Psoas muscle (tissue), 8 donors: ENCODE measurements at regions of chr2 and their contacts with region 1.

Region 1: GRCh38 chr2:85504778-85505323 is 34.1 kb upstream of the MAT2A start:
- DNase-seq: peak; percentile 77 to 83
- ATAC-seq: peak; percentile 91 to 95 (median 94)
- H3K4me3 ChIP-seq: no peak overlapping the region
- H3K27ac ChIP-seq: peak overlapping the region; percentile 73
- H3K4me1 ChIP-seq: peaks cover 26% of the 10 kb centered on the region
- H3K27me3 ChIP-seq: no peaks in the 10 kb centered on the region
- CTCF ChIP-seq: no peak

Region 2: GRCh38 chr2:85437488-85438284 is 67.2 kb before region 1 on chr2:
- intact Hi-C with region 1: loop called (anchors 2 to 5 kb)
- DNase-seq: peak; percentile 93 to 95
- ATAC-seq: peak; percentile 54 to 72 (median 66)
- H3K4me3 ChIP-seq: peak overlapping the region; percentile 63
- H3K27ac ChIP-seq: peak overlapping the region; percentile 78
- H3K4me1 ChIP-seq: peaks cover 41% of the 10 kb centered on the region
- H3K27me3 ChIP-seq: no peaks in the 10 kb centered on the region
- CTCF ChIP-seq: no peak

Region 3: GRCh38 chr2:85468704-85469349 is 36.0 kb before region 1 on chr2:
- intact Hi-C with region 1: no loop called
- DNase-seq: no peak
- ATAC-seq: peak in 1 of 4 donors; percentile 37
- H3K4me3 ChIP-seq: no peak overlapping the region
- H3K27ac ChIP-seq: no peak overlapping the region
- H3K4me1 ChIP-seq: no peaks in the 10 kb centered on the region
- H3K27me3 ChIP-seq: no peaks in the 10 kb centered on the region
- CTCF ChIP-seq: no peak

Region 4: DNA sequence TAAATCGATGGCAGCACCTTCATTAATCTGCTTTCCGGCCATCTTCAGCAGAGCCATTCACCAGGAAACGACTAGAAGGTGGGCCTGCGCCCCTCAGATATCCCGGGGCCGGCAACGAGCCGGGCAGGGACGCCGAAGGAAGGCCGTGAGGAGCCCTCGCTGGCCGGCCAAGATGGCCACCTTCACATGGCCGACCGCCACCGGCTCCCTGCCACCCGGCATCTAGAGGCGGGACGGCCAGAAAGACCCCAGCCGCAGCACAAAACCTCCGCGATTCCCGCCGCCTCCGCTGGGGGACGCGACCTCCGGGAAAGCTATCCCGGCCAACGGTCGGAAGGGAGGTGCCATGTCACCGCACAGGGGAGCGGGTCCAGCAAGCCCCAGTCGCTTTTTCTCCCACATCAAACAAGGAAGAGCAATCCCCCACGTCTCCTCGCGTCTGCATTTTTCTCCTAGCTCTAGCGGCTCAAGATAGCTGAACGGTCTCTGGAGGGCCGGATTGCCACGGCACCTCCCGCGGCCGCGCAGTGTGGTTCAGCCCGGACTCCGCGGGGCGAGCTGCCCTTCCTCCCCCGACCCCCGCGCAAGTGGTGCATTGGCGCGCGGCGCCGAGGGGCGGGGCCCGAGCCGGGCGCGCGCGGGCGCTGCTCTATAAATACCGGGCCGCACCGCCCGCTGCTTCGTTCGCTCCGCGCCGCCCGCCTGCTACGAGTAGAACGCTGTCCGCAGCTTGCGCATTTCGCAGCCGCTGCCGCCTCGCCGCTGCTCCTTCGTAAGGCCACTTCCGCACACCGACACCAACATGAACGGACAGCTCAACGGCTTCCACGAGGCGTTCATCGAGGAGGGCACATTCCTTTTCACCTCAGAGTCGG is 33.9 kb after region 1 on chr2 and contains the start of gene MAT2A:
- intact Hi-C with region 1: loop called (anchors 2 kb)
- DNase-seq: peak; percentile 97 to 98
- ATAC-seq: peak; percentile 82 to 88 (median 84)
- H3K4me3 ChIP-seq: peak within 1 kb of the TSS; percentile 89
- H3K27ac ChIP-seq: peak within 1 kb of the TSS; percentile 99
- H3K4me1 ChIP-seq: peaks cover 44% of the 10 kb centered on the region
- H3K27me3 ChIP-seq: no peaks in the 10 kb centered on the region
- CTCF ChIP-seq: peak; percentile 71
- total RNA-seq, gene MAT2A: 127 to 356 (median 183) TPM